ENCODE measurements at regions of chr11 and their contacts with region 1.

Region 1: DNA sequence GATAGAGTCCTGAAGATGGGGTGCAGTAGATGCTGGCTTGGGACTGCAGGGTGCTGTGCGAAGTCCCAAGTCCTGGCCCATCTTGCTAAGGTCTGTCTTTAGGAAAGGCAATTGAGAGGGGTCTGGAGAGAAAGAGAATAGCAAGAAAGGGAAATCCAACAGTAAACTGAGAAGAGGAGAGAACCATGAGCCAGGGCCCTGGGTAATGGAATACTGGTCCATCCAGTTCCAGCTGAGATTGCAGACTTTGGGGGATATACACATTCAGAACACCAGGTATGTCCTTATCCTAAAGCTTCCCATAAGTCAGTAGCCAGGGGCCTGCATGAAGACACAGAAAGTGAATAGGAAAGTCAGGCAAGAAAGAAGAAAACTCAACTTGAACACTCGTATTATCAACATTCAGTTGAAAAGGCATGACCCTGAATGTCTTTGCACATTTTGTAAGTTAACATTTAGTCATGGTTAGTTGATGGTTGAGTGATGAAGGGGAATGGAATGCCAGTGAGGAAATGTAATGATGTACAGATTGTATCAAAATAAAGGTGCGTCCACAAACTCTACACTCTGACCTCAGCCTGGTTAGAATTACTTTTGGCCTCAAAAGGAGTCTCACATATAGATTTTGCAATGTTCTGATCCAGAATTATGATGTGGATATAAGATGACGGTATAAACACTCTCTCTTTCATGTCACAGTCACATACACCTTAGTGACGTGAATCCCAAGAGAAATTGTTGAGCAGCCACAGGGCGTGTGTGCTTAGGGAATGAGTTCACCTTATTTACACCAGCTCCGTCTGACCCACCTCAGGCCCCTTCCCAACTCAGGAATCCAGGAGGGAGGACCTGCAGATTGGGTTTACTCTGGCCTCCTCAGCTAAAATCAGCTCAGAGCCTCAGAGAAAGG is 100.3 kb downstream of the RDX start:
- DNase-seq: no peak
- H3K4me3 ChIP-seq: no peak overlapping the region
- H3K4me1 ChIP-seq: peaks cover 9% of the 10 kb centered on the region
- H3K27me3 ChIP-seq: no peaks in the 10 kb centered on the region

Region 2: GRCh38 chr11:109971184-109971523 is 224.9 kb before region 1 on chr11:
- in situ Hi-C with region 1: loop called (anchors 25 kb)
- DNase-seq: no peak
- H3K4me3 ChIP-seq: no peak overlapping the region
- H3K4me1 ChIP-seq: no peaks in the 10 kb centered on the region
- H3K27me3 ChIP-seq: peaks cover 19% of the 10 kb centered on the region

Region 3: GRCh38 chr11:110373051-110373702 is 177.1 kb after region 1 on chr11:
- in situ Hi-C with region 1: loop called (anchors 5 kb)
- DNase-seq: no peak
- H3K4me3 ChIP-seq: no peak overlapping the region
- H3K4me1 ChIP-seq: peaks cover 14% of the 10 kb centered on the region
- H3K27me3 ChIP-seq: no peaks in the 10 kb centered on the region

Region 4: GRCh38 chr11:110429731-110430266 is 233.7 kb after region 1 on chr11 and contains the start of gene FDX1:
- in situ Hi-C with region 1: loop called (anchors 10 kb)
- DNase-seq: peak; percentile 89 to 90
- H3K4me3 ChIP-seq: peak within 1 kb of the TSS; percentile 61
- H3K4me1 ChIP-seq: peaks cover 18% of the 10 kb centered on the region
- H3K27me3 ChIP-seq: no peaks in the 10 kb centered on the region